ENCODE measurements at regions of chr1 and their contacts with region 1.

Region 1: DNA sequence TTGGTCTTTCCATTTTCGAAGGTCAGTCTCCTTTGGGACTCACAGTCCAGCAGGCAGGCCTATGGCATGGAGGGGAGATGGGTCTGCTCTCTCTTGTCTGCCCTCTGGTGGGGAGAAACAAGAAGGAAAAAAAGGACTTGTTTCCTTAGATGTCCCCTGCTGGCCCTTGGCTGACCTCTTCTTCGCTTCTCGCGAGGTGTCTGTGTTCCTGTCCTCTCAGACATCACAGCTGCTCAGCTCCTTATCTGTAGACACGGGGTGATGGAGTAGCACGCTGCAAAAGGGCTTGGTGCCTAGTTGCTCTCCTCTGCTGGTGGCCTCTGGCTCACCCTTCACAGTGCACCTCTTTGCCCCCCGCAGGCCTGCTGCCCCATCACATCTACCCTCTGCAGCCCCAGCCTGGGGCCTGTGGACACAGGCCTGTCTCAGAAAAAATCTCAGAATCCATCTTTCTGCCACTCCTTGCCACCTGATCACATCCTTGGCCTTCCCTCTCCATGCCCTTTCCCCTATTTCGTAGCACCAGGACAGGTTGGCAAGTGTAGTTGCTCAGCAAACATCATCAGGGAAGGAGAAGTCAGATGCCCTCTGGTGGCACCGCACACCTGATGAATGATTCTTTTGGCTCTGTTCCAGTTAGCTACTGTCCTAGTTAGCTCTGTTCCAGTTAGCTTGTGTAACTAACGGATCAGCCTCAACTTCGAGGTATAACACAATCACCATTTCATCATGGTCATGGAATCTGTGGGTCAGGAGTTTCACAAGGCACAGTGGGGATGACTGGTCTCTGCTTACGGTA is 18.7 kb upstream of the AK2 start:
- DNase-seq: peak; percentile 64 to 92
- ATAC-seq: peak; percentile 92 to 97
- H3K4me3 ChIP-seq: no peak overlapping the region
- H3K27ac ChIP-seq: peak overlapping the region; percentile 71 to 78
- H3K4me1 ChIP-seq: peaks cover 13% of the 10 kb centered on the region
- CTCF ChIP-seq: peak; percentile 55
- EP300 ChIP-seq: no peak
- POLR2A ChIP-seq: no peak
- RAD21 ChIP-seq: peak; percentile 57 to 65

Region 2: DNA sequence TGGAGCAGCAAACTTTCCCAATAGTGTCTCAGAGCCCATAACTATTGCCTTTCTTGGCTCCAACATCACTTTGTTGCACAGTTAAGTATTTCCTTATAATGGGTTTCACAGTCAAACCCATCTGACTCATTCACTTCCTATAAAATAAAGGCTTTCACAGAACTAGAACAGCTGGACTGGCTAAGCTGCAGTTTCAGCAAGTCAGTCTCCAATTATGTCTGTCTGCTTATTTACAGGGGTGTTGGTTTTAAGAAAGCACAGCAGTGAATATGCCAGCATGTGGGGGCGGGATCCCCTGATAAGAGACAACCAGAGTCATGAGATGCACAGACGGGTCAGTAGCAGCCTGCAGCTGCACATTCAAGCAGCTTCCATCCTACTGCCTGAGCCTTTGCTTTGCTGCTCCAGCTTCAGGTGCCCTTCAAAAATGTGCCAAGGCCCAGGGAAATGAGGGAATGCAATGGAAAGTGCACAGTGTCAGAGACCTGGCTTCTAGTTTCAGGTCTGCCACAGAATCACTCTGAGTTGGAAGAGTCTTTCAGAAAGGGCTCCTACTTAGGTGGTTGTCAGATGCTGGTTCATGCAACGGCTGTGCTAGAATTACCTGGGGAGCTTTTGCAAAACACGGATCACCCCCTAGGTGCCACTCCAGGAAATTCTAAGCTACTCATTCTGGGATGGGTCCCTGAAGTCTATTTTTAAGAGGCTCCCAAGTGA is 115.6 kb before region 1 on chr1:
- CTCF ChIA-PET with region 1: interaction called, 97 read pairs
- POLR2A ChIA-PET with region 1: no interaction called
- DNase-seq: no peak
- ATAC-seq: 0 out of 6 replicates have a peak, but pooled peaks of 1 of the 2 experiments have one; percentile 18
- H3K4me3 ChIP-seq: no peak overlapping the region
- H3K27ac ChIP-seq: peak overlapping the region in 1 of 2 experiments; percentile 3; a peak in 1 of 6 replicates
- H3K4me1 ChIP-seq: peaks cover 38% of the 10 kb centered on the region
- CTCF ChIP-seq: no peak
- EP300 ChIP-seq: no peak
- POLR2A ChIP-seq: no peak
- RAD21 ChIP-seq: no peak

Region 3: DNA sequence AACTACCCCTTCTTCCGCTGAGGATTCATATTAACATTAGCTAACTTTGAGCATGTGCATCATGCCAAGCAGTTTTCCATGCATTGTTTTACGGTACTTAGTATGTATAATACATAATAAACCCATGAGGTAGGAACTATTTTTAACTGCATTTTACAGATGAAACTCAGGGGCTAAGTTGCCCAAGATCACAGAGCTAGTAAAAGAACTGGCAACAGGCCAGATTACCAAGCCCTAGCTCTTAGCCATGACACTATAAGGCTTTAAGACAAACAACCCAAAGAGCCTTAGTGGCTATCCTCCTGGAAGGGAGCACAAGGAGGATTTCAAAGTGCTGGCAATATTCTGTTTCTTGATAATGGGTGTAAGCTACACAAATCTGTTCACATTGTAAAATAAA is 24.8 kb before region 1 on chr1:
- CTCF ChIA-PET with region 1: interaction called, 16 read pairs
- POLR2A ChIA-PET with region 1: no interaction called
- DNase-seq: no peak
- ATAC-seq: no peak
- H3K4me3 ChIP-seq: no peak overlapping the region
- H3K27ac ChIP-seq: no peak overlapping the region
- H3K4me1 ChIP-seq: peaks cover 27% of the 10 kb centered on the region
- CTCF ChIP-seq: no peak
- EP300 ChIP-seq: no peak
- POLR2A ChIP-seq: no peak
- RAD21 ChIP-seq: no peak

Region 4: DNA sequence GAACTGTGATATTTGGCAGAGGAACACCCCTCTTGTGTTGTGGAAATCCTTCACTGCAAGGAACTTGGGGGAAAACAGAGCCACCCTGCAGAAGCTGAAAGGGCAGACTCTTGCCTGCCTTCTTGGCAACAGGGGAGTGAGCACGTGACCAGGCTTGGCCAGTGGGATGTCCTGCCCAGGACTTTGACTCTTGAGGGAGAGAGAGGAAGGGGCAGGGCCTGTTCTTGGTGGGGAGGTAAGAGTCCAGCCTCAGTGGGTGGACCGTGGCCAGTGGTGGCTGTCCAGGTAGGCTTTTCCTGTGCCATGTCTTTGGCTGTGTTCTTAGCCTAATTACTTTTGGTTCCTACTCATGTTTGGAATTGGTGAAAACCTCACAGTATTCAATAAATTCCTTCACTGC is 10.2 kb before region 1 on chr1:
- CTCF ChIA-PET with region 1: interaction called, 15 read pairs
- POLR2A ChIA-PET with region 1: no interaction called
- DNase-seq: peak in 1 of 2 experiments; percentile 29
- ATAC-seq: peak in 1 of 2 experiments; percentile 75; a peak in 3 of 6 replicates
- H3K4me3 ChIP-seq: no peak overlapping the region
- H3K27ac ChIP-seq: peak overlapping the region in 1 of 2 experiments; percentile 37; a peak in 1 of 6 replicates
- H3K4me1 ChIP-seq: peaks cover 18% of the 10 kb centered on the region; the same call in 2 of the 3 replicates
- CTCF ChIP-seq: no peak
- EP300 ChIP-seq: no peak
- POLR2A ChIP-seq: no peak
- RAD21 ChIP-seq: no peak

Region 5: DNA sequence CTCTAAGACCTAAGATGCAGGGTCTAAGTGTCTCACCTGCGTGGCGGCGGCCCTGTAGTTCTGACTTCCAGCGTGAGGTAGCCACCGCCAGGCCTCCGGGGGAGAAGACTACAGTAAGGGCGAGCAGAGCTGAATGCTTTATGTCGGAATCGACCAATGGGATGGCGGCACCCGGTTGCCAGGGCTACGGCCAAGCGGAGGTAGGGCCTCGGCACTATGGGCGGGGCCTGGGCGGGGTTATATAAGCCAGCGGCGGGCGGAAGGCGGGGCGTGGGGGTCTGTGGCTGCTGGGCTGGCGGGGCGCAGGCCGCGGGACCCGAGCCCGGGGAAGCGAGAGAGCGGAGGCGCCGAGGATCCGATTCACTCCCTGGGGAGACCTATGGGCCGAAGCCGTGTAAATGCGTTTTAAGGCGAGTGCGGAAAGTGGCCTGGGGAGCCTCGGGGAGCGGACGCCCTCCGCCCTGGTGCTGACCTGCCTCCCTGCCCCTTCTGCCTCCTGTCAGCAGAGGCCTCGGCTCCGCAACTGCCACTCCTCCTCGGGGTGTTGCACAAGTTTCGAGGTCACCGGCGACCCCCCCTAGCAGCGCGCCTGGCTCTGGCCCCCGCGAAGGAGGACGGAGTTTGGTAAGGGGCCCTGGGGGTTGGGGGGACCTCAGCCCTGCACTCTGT is 25.6 kb after region 1 on chr1 and contains the start of gene AZIN2:
- CTCF ChIA-PET with region 1: interaction called, 21 read pairs
- POLR2A ChIA-PET with region 1: interaction called, 6 read pairs
- DNase-seq: peak; percentile 89
- ATAC-seq: peak; percentile 98 to 100
- H3K4me3 ChIP-seq: peak within 1 kb of the TSS; percentile 65
- H3K27ac ChIP-seq: peak within 1 kb of the TSS; percentile 68 to 92
- H3K4me1 ChIP-seq: 0 out of 3 replicates have a peak, but pooled peaks cover 8% of the 10 kb centered on the region
- CTCF ChIP-seq: no peak
- EP300 ChIP-seq: no peak
- POLR2A ChIP-seq: peak; percentile 87
- RAD21 ChIP-seq: no peak
- polyA plus RNA-seq, gene AZIN2: 1.7 and 1.9 TPM in 2 replicates

Measured in A549 (cell line).